AG04449 (cell line): ENCODE measurements at regions of chr17 and their contacts with region 1.

Region 1: GRCh38 chr17:43994272-43995149 is 9.9 kb upstream of the NAGS start:
- DNase-seq: no peak
- H3K4me3 ChIP-seq: peak overlapping the region; percentile 50
- CTCF ChIP-seq: peak; percentile 85

Region 2: DNA sequence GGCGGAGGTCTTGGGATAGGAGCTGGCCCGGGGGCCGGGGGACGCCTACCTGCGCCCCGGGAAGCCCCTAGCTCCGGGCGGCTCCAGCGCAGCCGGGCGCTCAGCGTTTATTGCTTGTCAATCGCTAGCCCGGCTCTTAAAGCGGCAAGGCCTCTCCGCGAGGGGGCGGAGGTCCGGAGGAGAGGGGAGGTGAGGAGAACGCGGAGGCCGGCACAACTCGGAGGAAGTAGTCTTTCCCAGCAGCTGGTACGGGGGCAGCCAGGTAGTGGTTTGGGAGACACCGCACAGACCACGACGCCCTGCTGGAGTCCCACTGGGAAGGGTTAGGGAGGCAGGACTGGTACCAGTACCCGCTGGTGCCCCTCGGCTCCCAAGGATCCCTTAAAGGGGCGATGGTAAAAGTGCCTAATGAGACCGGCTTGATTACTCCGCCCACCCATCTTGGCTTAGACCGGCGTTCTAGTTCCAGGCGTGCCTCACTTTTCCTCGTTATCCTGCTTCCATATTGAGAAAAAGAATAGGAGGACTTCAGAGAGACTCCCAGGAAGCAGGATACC is 87.0 kb before region 1 on chr17 and contains the start of gene MPP2:
- CTCF ChIA-PET with region 1: interaction called, 66 read pairs
- POLR2A ChIA-PET with region 1: no interaction called
- DNase-seq: no peak
- H3K4me3 ChIP-seq: peak within 1 kb of the TSS; percentile 74
- CTCF ChIP-seq: peak; percentile 32

Region 3: DNA sequence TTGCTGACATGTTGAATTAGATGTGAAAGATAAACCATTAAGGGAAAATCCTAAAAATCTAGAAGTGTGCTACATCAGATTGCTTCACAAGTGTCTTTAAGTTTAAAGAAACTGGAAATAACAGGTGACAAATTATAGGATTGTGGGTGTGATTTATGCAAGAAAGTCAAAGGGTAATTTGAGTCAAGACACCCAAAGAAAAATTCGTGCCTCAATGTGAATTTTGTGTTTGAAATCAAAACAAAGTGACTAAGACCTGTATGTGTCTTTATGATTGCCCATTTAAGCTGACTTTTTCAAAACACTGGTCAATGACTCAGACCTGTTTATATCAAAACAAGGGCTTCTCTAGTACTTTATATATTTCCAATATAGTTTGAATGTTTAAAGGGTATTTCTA is 35.6 kb before region 1 on chr17:
- CTCF ChIA-PET with region 1: interaction called, 15 read pairs
- POLR2A ChIA-PET with region 1: no interaction called
- DNase-seq: no peak
- H3K4me3 ChIP-seq: no peak overlapping the region
- CTCF ChIP-seq: no peak

Region 4: DNA sequence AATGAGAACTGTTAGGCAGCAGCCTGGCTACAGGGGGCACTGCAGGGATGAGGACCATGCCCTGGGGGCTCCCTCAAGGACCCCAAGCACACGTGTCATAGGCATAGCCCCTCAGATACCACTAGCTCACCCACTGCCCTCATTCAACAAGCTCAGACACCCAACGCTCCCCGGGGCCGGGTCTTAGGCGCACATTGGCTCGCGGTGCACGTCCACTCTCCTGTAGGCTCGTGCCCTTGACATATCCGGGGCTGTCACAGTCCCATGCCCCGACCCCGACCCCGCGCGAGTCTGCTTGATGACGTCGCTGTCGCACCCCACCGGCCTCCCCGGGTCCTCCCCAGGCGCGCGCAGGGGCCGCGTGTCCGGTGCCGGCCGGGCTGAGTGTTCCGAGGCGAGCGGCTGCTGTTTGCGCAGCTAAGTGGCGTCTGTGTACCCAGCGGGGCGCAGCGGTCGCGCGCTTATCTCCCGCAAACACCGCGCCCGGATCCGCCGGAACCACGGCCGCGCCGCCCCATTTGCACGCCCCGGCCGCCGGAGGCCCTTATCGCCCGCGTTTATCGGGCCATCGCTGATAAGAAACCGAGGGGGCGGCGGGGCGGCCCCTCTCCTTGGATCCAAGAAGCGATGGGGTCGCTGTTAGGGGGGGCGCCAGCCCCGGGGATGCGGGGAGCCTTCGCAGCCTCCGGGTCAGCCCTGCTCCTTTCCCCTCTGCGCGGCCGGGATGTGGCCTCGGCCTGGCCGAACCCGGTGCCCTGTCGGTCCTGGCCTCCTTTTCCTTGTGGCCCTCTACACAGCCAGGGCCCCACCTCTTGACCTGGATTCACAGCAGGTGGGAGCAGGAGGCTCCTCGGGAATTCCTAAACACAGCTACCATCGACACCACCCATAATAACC is 10.7 kb before region 1 on chr17:
- CTCF ChIA-PET with region 1: interaction called, 69 read pairs
- POLR2A ChIA-PET with region 1: no interaction called
- DNase-seq: no peak
- H3K4me3 ChIP-seq: peak overlapping the region; percentile 43
- CTCF ChIP-seq: peak; percentile 16

Region 5: GRCh38 chr17:44022247-44022646 is 27.7 kb after region 1 on chr17:
- CTCF ChIA-PET with region 1: no interaction called
- POLR2A ChIA-PET with region 1: no interaction called
- DNase-seq: no peak
- H3K4me3 ChIP-seq: no peak overlapping the region
- CTCF ChIP-seq: no peak